Psoas muscle (tissue), 8 donors: ENCODE measurements at regions of chr13 and their contacts with region 1.

Region 1: DNA sequence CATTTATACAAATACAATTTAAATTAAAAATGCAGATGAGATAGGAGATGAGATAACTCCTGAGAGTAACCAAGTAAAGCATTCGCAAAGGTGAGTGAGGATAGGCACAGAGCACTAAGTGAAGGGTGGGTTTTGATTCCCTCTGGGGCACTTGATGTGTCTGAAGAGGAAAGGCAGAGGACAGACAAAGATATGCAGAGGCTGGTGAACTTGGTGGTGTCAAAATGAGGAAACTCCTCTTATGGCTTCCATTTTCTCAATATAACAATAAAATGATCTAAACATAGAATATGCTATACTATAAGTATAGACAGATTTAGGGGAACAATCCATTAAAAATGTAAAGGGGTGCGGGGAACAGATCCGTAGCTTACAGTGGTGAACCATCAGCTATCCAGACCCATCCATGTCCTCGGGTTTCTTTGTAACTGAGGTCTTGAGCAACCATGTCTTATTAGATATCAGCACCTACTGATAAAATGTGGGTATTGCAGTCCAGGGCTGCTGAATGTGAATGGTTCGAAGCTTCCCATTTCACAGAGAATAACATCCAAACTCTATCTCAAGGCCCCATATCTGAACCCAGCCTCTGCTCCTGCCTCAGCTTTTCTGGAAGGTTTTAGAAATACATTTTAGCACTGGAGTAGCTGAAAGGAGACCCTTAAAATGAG is 73.9 kb upstream of the SLC10A2 start:
- DNase-seq: no peak
- ATAC-seq: peak in 2 of 4 donors; percentile 49 to 58
- H3K4me3 ChIP-seq: no peak overlapping the region
- H3K27ac ChIP-seq: no peak overlapping the region
- H3K4me1 ChIP-seq: no peaks in the 10 kb centered on the region
- H3K27me3 ChIP-seq: no peaks in the 10 kb centered on the region
- CTCF ChIP-seq: peak; percentile 44

Region 2: GRCh38 chr13:102913914-102914313 is 226.2 kb before region 1 on chr13:
- intact Hi-C with region 1: loop called (anchors 5 to 10 kb)
- DNase-seq: no peak
- ATAC-seq: peak in 1 of 4 donors; percentile 65
- H3K4me3 ChIP-seq: no peak overlapping the region
- H3K27ac ChIP-seq: no peak overlapping the region
- H3K4me1 ChIP-seq: peaks cover 4% of the 10 kb centered on the region
- H3K27me3 ChIP-seq: no peaks in the 10 kb centered on the region
- CTCF ChIP-seq: no peak